ENCODE measurements at regions of chr12 and their contacts with region 1.

Region 1: GRCh38 chr12:2944401-2945047 is 14.7 kb upstream of the TEAD4 start:
- DNase-seq: peak; percentile 46
- H3K4me3 ChIP-seq: peak overlapping the region in 1 of 3 experiments; percentile 24
- H3K27ac ChIP-seq: no peak overlapping the region
- H3K4me1 ChIP-seq: no peaks in the 10 kb centered on the region
- H3K27me3 ChIP-seq: no peaks in the 10 kb centered on the region
- CTCF ChIP-seq: peak; percentile 91 to 92

Region 2: DNA sequence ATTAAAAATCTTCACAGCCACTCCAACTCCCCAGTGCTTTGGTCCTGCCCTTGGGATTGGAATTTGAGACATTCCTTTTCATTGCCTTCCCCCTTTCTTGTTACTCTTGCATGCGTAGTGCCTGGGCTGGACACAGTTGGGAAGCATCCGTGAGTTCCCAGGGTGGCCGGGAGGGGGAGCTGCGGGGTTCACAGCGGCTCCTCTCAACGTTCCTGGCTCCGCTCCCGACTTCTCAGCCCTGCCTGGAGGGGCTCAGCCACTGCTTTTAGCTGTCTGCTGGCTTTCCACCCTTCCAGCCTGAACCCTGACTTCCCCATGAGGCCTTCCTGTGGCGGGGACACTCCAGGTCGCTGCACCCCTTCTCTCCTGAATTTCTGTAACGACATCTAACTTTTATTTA is 90.9 kb before region 1 on chr12:
- CTCF ChIA-PET with region 1: no interaction called
- dilution Hi-C with region 1: no loop called
- in situ Hi-C with region 1: no loop called
- intact Hi-C with region 1: loop called (anchors 1 kb)
- DNase-seq: peak; percentile 35
- H3K4me3 ChIP-seq: no peak overlapping the region
- H3K27ac ChIP-seq: no peak overlapping the region
- H3K4me1 ChIP-seq: no peaks in the 10 kb centered on the region
- H3K27me3 ChIP-seq: no peaks in the 10 kb centered on the region
- CTCF ChIP-seq: peak; percentile 84 to 91

Region 3: DNA sequence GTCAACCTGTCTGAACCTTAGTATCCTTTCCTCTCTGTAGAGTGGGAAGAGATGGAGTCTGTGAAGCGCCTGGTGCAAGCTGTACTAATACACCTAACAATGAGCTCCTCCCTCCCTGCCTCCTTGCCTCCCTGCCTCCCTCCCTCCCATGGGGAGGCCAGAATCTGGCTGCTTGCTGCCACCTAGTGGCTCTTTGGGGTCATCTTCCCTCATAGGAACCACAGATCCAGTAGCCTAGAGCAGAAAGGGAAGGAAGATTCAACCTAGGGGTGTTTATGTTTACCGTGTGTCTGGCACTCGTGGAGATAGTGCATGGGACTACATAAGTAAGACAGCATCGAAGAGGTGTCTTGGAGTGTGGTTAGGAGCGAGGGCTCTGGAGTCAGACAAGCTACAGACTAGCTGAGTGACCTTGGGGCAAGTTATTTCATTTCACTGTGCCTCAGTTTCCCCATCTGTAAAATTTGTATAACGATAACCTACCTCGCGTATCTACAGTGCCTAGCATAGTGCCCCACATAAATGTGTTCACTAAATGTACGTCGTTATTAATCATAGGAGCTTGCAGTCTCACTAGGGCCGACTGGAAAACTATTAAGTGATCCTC is 97.1 kb after region 1 on chr12:
- CTCF ChIA-PET with region 1: no interaction called
- dilution Hi-C with region 1: no loop called
- in situ Hi-C with region 1: no loop called
- intact Hi-C with region 1: loop called (anchors 5 kb)
- DNase-seq: peak; percentile 69
- H3K4me3 ChIP-seq: no peak overlapping the region
- H3K27ac ChIP-seq: no peak overlapping the region
- H3K4me1 ChIP-seq: no peaks in the 10 kb centered on the region
- H3K27me3 ChIP-seq: no peaks in the 10 kb centered on the region
- CTCF ChIP-seq: peak; percentile 59 to 75

Region 4: GRCh38 chr12:3073438-3074250 is 129.1 kb after region 1 on chr12:
- CTCF ChIA-PET with region 1: no interaction called
- dilution Hi-C with region 1: no loop called
- in situ Hi-C with region 1: no loop called
- intact Hi-C with region 1: no loop called
- DNase-seq: peak; percentile 65
- H3K4me3 ChIP-seq: no peak overlapping the region
- H3K27ac ChIP-seq: no peak overlapping the region
- H3K4me1 ChIP-seq: peaks cover 18% of the 10 kb centered on the region
- H3K27me3 ChIP-seq: no peaks in the 10 kb centered on the region
- CTCF ChIP-seq: peak; percentile 99 to 100